ENCODE measurements at regions of chr13 and their contacts with region 1.

Region 1: DNA sequence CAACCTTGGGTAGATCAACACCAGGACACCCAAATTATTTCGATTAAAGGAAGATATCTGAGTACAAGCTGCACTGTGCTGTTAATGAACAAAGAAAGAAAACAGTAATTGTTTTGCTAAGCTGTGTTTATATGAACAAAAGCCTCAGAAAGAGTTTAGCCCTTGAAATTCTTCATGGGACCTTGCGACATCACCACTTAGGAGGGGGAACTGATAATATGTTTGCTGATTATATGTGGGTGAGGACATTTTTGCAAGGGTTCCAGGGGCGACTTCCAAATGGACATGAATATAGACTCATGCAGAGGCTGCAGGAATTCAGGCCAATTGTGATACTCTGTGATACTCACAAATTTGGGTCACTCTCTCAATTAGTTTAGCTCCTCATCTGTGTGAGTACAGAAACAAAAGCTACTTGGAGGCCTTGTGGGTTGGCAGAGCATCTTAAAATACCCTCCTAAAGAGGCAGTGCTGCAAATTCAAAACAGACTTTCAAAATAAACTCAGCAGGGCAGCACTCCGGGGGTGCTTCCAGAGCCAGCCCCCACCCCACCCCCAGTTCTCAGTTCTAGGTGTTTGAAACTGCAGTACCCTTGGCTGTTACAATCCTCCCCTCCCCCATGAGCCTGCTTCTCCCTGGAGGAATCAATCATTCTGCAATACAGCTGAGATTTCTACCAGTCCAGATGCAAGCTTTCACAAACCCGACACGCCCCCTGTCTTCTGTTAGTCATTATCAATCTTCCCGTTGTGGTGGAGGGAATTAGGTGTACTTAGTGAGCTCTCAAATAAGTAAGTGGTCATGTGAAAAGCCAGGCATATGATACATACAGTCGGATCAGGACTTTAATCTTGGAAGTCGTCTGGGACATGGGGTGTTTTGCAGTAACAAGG is 97.0 kb upstream of the MBNL2 start:
- DNase-seq: no peak
- CTCF ChIP-seq: no peak

Region 2: GRCh38 chr13:96229356-96229755 is 895.8 kb before region 1 on chr13:
- in situ Hi-C with region 1: no loop called
- DNase-seq: no peak
- CTCF ChIP-seq: peak; percentile 37

Region 3: GRCh38 chr13:97353927-97354675 is 228.9 kb after region 1 on chr13:
- in situ Hi-C with region 1: loop called (anchors 5 kb)
- DNase-seq: no peak
- CTCF ChIP-seq: no peak